ENCODE measurements at regions of chr18 and their contacts with region 1.

Region 1: DNA sequence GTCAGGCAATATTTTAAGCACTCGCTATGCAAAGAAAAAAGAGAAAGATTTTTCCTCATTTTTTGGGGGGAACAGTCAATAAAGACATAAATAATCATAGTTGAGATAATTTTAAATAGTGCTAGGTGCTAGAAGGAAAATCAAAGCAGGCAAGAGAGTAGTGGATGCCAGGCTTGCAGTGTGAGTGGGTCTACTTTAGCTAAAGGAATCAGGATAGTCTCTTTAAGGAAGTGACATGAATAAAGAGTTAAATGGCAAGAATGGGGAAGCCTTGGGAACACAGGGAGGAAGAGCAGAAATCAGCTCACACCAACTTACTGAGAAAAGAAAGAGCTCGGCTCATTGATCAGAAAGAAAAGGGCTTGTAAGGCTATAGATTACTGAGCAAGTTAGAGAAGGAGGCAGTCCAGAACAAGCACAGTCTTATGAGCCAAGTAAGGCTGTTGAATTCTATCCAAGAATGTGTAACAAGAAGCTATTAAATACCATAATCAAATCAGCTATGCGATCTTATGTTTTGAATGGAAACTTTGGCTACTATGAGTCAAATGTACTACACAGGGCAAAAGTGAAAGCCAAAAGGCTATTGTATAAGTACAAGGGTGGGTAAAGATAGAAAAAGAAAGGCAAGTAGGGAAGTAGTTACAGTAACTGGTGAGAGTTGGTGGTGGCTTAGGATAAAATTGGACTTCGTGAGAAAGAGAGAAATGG is 833.8 kb upstream of the PIK3C3 start:
- DNase-seq: no peak
- H3K4me3 ChIP-seq: no peak overlapping the region
- H3K27ac ChIP-seq: no peak overlapping the region
- H3K4me1 ChIP-seq: no peaks in the 10 kb centered on the region
- H3K27me3 ChIP-seq: no peaks in the 10 kb centered on the region
- CTCF ChIP-seq: no peak

Region 2: DNA sequence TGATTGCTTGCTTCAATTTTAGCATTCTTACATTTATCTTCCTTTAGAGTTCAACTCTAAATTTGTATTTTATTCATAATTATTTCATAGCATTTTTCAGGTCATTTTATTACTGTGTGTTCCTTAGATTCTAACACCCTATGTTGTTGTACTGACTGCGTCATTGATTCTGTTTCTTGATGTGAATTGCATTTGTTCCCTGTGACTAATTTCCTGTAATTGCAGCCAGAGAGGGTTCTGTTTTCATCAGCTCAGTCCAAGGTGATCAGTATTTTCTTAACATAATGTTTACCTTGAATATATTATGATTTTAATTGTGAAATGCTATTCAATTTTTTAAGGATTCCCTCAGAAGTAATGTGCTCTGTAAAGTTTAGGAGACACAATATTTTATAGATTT is 136.4 kb before region 1 on chr18:
- CTCF ChIA-PET with region 1: no interaction called
- POLR2A ChIA-PET with region 1: interaction called, 18 read pairs
- intact Hi-C with region 1: no loop called
- DNase-seq: no peak
- H3K4me3 ChIP-seq: no peak overlapping the region
- H3K27ac ChIP-seq: no peak overlapping the region
- H3K4me1 ChIP-seq: no peaks in the 10 kb centered on the region
- H3K27me3 ChIP-seq: no peaks in the 10 kb centered on the region
- CTCF ChIP-seq: no peak

Measured in PC-9 (cell line).